Motor neuron (in vitro differentiated cells): ENCODE measurements at regions of chr11 and their contacts with region 1.

Region 1: GRCh38 chr11:12331239-12331874 is 46.0 kb upstream of the PARVA start:
- ATAC-seq: peak; percentile 81 to 93 (median 85)
- H3K4me3 ChIP-seq: no peak overlapping the region
- H3K27ac ChIP-seq: no peak overlapping the region
- H3K4me1 ChIP-seq: peaks cover 11 to 14% of the 10 kb centered on the region in 2 donors

Region 2: DNA sequence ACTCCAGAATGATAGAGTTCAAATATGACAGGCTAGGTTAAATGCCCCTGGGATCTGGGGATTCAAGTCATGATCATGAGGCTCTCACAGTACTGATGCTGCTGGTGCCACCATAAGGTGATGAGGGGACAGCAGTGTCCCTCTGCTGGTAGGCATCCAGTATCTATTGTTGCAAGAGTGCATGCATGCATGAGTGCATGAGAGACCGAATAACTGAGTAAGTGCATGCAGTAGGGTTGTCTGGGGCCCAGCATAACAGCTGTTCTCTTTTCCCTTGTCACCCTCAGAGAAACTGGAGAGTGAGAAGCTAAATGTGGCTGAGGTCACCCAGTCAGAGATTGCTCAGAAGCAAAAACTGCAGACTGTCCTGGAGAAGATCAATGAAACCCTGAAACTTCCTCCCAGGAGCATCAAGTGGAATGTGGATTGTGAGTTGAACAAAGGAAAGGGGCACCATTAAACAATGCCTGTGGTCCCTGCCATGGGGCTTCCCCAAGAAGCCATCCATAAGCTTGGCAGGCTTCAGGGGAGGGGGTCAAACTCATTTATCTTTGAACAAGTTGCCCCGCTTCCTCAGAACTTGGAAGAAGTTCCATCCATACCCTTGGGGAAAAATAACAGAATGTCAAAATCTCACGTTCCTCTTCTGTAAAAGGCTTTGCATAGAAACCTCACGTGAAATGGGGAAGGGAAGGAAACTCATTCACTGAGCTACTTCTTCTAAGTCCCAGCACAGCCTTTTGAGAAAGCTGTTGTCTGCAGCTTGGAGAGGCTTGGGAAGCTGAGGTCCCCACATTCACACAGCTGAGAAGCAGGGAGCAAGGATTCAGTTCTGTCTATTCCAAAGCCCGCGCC is 165.0 kb after region 1 on chr11:
- in situ Hi-C with region 1: no loop called
- ATAC-seq: peak in 5 of 8 experiments; percentile 21 to 63 (median 40)
- H3K4me3 ChIP-seq: no peak overlapping the region
- H3K27ac ChIP-seq: no peak overlapping the region
- H3K4me1 ChIP-seq: peaks cover 0 to 9% of the 10 kb centered on the region in 2 donors

Region 3: GRCh38 chr11:12669930-12670329 is 338.6 kb after region 1 on chr11:
- in situ Hi-C with region 1: no loop called
- ATAC-seq: no peak
- H3K4me3 ChIP-seq: no peak overlapping the region
- H3K27ac ChIP-seq: no peak overlapping the region
- H3K4me1 ChIP-seq: no peaks in the 10 kb centered on the region

Region 4: DNA sequence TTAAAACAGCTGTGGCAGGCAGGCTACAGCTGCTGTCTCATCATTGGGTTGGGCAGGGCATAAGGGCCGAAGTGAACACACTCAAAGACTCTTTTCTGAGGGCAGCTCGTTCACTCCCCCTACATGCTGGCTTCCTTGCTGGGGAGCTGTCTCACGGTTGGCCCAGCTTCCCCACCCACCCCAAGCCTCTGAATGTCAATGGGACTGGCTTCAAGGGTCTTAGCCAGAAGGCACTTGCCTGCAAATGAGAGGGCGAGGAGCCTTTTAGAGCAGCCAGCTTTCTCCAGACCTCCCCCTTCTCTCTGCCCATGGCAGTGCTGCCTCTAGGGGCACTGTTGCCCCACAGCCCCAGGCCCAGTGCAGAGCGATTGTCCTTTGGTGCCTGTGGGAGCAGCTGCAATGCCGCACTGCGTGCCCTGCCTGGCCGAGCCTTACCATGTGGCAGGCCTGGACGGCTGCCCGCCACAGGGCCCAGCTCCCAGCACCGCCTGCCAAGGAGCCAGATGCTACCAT is 583.1 kb after region 1 on chr11:
- in situ Hi-C with region 1: loop called in 2 of 9 experiments (anchors 10 to 25 kb)
- ATAC-seq: peak; percentile 95 to 99 (median 96)
- H3K4me3 ChIP-seq: no peak overlapping the region
- H3K27ac ChIP-seq: no peak overlapping the region
- H3K4me1 ChIP-seq: peaks cover 5 to 6% of the 10 kb centered on the region in 2 donors

Region 5: GRCh38 chr11:13152736-13153533 is 821.6 kb after region 1 on chr11:
- in situ Hi-C with region 1: loop called in 1 of 9 experiments (anchors 25 kb)
- ATAC-seq: no peak
- H3K4me3 ChIP-seq: no peak overlapping the region
- H3K27ac ChIP-seq: no peak overlapping the region
- H3K4me1 ChIP-seq: no peaks in the 10 kb centered on the region